ENCODE measurements at regions of chr4 and their contacts with region 1.

Region 1: DNA sequence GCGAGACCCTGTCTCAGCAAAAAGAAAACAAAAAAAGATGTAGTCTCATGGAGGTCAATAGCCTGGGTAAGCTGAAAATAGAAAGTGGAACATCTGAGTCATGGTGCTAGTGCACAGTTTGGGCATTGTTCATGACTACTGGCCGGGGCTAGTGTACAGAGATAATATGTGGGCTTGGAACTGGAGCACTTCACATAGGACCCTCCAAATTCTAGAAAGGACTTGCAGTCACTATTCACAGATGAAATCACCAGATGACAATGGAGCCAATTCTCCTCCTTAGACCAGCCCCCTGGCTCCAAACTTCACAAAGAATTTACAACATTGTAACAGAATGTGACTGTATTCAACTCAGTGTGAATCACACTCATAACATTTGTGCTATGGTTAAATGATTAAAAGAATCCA is 367.8 kb upstream of the SLC7A11 start:
- DNase-seq: peak in 1 of 2 donors; percentile 49
- ATAC-seq: peak; percentile 91
- H3K4me3 ChIP-seq: no peak overlapping the region
- H3K27ac ChIP-seq: peak overlapping the region in 1 of 2 donors; percentile 1
- H3K4me1 ChIP-seq: peaks cover 3 to 8% of the 10 kb centered on the region in 2 donors
- H3K27me3 ChIP-seq: no peaks in the 10 kb centered on the region

Region 2: GRCh38 chr4:138348055-138348454 is 261.9 kb before region 1 on chr4:
- intact Hi-C with region 1: no loop called
- DNase-seq: no peak
- ATAC-seq: no peak
- H3K4me3 ChIP-seq: no peak overlapping the region
- H3K27ac ChIP-seq: no peak overlapping the region
- H3K4me1 ChIP-seq: no peaks in the 10 kb centered on the region
- H3K27me3 ChIP-seq: no peaks in the 10 kb centered on the region

Region 3: GRCh38 chr4:138428611-138429010 is 181.3 kb before region 1 on chr4:
- intact Hi-C with region 1: loop called in 1 of 2 experiments (anchors 10 kb)
- DNase-seq: no peak
- ATAC-seq: no peak
- H3K4me3 ChIP-seq: no peak overlapping the region
- H3K27ac ChIP-seq: no peak overlapping the region
- H3K4me1 ChIP-seq: peaks cover 0 to 4% of the 10 kb centered on the region in 2 donors
- H3K27me3 ChIP-seq: no peaks in the 10 kb centered on the region